AG04449 (cell line): ENCODE measurements at regions of chr17 and their contacts with region 1.

Region 1: DNA sequence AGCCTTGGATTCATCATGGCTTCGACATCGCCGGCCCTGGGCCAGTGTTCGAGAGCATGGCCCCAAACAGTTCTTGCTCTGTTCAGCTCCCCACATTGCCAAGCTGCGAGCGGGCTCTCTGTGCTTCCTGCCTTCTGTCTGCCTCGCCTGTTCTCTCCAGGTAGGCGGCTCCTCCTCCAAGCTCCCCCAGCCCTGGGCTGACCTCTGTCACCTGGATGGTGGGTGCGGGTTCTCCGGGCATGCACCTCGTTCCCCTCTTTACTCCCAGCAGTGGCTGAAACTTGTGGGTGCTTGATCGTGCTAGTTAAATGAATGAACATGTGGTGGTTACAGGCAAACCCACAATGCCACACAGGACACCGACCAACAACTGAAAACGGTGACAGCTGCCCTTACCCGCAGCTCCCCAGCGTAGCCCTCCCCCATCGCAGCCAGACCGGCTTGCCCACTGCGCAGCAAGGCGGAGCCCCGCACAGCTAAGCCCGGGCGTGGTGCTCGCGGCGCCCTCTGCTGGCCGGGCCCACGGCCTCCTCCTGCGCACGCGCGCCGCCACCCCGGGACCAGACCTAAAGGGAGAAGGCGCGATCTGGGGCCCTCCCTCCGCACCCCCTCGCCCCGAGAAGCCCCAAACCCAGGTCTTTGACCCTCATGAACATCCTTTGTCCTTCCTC is 23.0 kb upstream of the EIF1 start:
- DNase-seq: no peak
- H3K4me3 ChIP-seq: peak overlapping the region; percentile 55
- CTCF ChIP-seq: peak; percentile 90

Region 2: DNA sequence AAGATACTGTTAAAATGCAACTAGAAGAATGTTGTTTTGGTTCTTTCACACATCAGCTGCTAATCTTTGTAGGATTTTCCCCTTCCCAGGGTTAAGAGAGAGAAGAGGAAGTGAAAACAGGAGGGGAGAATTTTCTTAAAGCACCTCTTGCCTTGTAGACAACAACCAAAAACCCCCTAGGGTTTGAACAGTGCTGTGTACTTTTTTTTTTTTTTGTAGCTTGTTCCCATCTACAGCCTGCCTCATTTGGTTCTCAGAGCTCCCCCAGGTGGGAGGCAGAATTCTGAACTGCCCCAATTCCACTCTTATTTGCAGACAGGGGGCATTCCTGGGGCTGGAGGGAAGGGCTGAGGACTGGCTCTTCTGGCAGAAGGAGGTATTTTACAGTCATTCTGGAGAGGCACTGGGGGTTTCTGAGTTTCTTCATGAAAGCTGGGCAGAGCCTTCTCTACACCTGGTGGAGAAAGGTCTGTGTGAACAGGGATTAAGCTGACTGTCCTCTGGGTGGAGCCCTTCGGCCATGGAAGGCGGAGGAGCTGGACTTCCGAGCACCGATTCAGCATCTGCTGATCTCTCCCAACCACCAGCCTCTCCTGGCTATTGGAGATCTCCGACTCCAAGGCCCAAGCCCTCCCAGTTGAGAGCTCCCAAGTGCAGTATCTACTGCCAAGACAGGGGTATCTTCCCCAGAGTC is 1050.3 kb before region 1 on chr17:
- CTCF ChIA-PET with region 1: interaction called, 38 read pairs
- POLR2A ChIA-PET with region 1: interaction called, 3 read pairs
- DNase-seq: no peak
- H3K4me3 ChIP-seq: no peak overlapping the region
- CTCF ChIP-seq: peak; percentile 42

Region 3: GRCh38 chr17:40810505-40810904 is 855.2 kb before region 1 on chr17:
- CTCF ChIA-PET with region 1: interaction called, 325 read pairs
- POLR2A ChIA-PET with region 1: no interaction called
- DNase-seq: peak; percentile 40
- H3K4me3 ChIP-seq: no peak overlapping the region
- CTCF ChIP-seq: no peak

Region 4: GRCh38 chr17:40872416-40872815 is 793.3 kb before region 1 on chr17:
- CTCF ChIA-PET with region 1: interaction called, 10 read pairs
- POLR2A ChIA-PET with region 1: no interaction called
- DNase-seq: no peak
- H3K4me3 ChIP-seq: no peak overlapping the region
- CTCF ChIP-seq: no peak

Region 5: GRCh38 chr17:41538565-41538991 is 127.1 kb before region 1 on chr17:
- CTCF ChIA-PET with region 1: interaction called, 17 read pairs
- POLR2A ChIA-PET with region 1: no interaction called
- DNase-seq: no peak
- H3K4me3 ChIP-seq: no peak overlapping the region
- CTCF ChIP-seq: no peak

Region 6: DNA sequence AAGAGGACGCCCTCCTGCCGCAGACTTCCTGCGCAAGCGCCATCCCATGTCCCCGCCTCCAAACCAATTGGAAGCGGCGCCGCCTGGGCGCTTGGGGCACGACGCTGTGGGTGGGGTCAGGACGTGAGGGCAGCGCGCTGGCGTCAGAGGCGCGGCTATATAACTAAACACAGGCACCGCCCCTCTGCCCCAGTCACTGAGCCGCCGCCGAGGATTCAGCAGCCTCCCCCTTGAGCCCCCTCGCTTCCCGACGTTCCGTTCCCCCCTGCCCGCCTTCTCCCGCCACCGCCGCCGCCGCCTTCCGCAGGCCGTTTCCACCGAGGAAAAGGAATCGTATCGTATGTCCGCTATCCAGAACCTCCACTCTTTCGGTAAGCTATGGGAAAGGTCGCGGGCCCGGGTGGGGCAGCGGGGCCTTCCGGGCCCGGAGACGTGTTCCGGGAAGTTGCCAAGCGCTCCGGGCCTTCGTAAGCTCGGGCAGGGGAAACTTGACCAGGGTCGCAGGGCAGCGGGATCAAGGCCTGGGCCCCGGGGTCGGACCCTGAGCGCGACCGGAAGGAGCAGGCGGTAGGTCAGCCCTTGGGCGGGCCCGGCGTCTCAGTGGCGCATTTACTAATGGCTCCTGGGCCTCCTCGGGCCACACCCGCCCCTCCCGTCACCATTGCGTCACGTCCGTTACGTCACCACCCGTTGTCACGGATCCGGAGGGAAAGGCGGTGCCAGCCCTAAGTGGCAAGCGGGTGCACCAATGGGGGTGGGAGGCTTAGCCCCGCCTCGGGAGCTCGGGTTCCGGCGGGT is 23.2 kb after region 1 on chr17 and contains the start of gene EIF1:
- CTCF ChIA-PET with region 1: interaction called, 13 read pairs
- POLR2A ChIA-PET with region 1: interaction called, 9 read pairs
- DNase-seq: peak; percentile 97
- H3K4me3 ChIP-seq: peak within 1 kb of the TSS; percentile 90
- CTCF ChIP-seq: no peak

Region 7: DNA sequence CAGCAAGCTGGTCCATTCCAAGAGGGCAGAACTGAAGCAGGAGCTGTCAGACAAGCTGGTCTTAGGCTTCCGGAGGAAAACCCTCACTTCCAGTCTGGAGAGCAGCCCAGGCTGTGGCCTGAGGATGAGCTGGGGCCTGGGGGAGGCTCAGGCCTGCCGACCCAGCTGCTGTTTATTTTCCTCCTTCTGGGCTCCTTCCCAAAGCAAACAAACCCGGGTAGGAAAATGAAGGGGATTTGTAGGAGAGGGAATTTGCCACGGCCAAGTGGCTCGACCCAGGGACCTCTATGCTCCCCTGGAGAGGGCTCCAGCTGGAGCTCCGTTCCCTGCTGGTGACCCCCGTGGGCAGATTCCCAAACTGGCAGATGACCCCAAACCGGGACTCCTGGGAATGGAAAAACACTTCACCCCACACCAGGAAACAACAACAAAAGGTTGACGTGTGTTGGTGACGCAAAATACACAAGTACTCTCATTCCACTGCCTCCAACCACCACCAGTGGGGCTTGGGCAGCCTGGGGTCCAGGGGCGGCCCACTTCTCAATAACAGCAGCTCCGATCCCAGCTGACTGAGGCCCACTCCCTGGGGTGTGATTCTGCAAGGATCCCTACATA is 112.0 kb after region 1 on chr17:
- CTCF ChIA-PET with region 1: no interaction called
- POLR2A ChIA-PET with region 1: no interaction called
- DNase-seq: peak; percentile 47
- H3K4me3 ChIP-seq: no peak overlapping the region
- CTCF ChIP-seq: no peak